ENCODE measurements at regions of chr5 and their contacts with region 1.

Region 1: DNA sequence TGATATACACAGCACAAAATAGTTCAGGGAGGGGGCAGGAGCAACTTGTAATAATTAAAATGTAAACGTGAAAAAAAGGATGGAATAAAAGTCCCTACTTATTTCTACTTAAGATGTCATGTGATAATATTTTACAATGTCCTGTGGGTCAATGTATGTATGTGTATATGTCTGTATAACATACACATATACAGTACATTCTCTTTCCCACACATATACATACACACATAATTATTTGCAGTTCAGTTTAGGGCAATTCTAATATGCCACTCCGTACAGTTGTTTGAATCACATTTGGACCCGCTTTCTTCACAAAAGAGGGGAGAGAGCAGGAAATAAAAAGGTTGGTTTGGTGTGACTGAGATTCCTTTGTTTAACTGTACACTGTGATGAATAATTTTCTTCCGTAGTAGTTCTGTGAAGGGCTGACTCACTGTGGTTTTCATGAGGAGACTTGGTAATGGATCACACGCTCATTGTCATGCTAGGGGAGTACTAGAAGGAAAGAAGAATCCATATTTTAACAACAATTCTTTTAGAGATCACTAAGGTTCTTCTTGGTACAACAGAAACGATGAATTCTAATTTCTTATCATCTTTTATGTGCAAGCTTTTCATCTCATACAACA is 26.2 kb upstream of the ACOT12 start:
- DNase-seq: peak; percentile 21
- H3K4me3 Mint-ChIP-seq: peak overlapping the region; percentile 28
- H3K27ac Mint-ChIP-seq: peak overlapping the region; percentile 70
- H3K4me1 Mint-ChIP-seq: peaks cover 36% of the 10 kb centered on the region
- H3K27me3 Mint-ChIP-seq: no peaks in the 10 kb centered on the region

Region 2: DNA sequence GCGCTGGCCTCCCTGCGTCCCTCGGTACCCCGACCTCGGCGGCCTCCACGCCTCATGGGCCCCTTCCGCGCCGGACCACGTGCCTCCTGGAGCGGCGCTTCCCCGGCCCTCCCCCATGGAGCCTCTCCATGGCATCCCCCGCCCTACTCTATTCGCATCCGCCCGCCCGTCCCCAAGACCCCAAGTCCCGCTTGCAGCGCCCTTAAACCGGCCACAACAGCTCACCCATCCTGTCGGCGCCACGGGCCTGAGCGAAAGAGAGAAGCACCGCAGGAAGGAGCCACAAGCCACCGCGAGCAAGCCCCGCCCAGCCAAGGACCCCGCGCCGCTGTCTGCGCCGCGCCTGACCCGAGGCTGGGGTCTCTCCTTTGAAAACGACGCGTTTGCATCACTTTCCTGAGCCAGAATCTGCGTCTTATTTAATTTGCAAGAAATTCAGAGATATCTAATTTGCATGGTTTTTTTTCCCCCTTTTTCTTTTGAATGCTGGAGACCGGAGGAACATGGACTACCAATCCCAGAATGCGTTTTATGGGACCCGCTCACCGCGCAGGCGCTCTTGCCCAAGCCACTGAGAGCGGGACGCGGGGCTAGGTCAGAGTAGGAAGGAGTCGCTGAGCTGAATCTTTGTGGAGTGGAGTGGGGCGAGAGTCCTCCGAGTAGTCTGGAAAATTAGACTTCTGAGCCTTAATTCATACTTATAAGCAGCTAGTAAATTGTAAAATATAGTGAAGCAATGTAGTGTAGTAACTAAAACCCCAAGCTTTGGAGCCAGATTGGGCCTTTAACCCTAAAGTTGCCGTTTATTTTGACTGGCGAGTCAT is 858.2 kb after region 1 on chr5 and contains the start of gene RPS23:
- intact Hi-C with region 1: loop called (anchors 5 kb)
- DNase-seq: peak; percentile 81
- H3K4me3 Mint-ChIP-seq: peak within 1 kb of the TSS; percentile 92
- H3K27ac Mint-ChIP-seq: peak within 1 kb of the TSS; percentile 96
- H3K4me1 Mint-ChIP-seq: peaks cover 34% of the 10 kb centered on the region
- H3K27me3 Mint-ChIP-seq: no peaks in the 10 kb centered on the region
- total RNA-seq, gene RPS23: 2,220 and 2,235 TPM in 2 replicates